Activated T-helper 2 cell treated with anti-CD3 and anti-CD28 coated beads, Interferon-gamma antibody, Interleukin-2, Interleukin-4, amounts not matched to agents 10 μg/mL and 5 μg/mL and 100 μg/mL, durations not matched to agents 14 hours and 24 hours and 36 hours (primary cell): ENCODE measurements at regions of chr12 and their contacts with region 1.

Region 1: GRCh38 chr12:92145731-92146496 is at the start of gene BTG1:
- DNase-seq: peak; percentile 100
- H3K4me3 Mint-ChIP-seq: peak within 1 kb of the TSS; percentile 98
- H3K27ac Mint-ChIP-seq: peak within 1 kb of the TSS; percentile 99
- H3K4me1 Mint-ChIP-seq: peaks cover 34% of the 10 kb centered on the region
- H3K27me3 Mint-ChIP-seq: no peaks in the 10 kb centered on the region
- total RNA-seq, gene BTG1: 67.8 and 71.7 TPM in 2 replicates

Region 2: DNA sequence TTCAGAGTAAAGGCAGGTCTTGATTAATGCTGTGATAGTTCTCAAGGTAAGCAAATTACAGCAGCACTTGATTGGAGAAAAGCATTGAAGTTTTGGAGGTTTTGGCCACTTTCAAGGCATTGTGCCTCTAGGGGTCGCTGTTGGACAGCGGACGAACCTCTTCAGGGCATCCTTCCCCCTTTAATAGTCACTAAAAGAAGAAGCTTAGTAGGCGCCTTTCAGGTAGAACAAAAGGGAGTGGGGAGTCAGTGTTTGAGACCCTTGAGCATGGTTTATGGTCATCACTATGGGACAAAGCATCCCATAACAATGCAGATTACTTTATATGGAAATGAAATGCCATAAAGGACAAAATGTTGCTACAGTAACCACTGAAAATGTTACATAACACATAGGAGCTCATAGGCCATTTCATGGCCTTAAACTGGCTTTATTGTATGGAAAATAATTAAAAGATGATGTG is 763.8 kb before region 1 on chr12:
- intact Hi-C with region 1: loop called (anchors 1 kb)
- DNase-seq: peak; percentile 64
- H3K4me3 Mint-ChIP-seq: peak overlapping the region; percentile 78
- H3K27ac Mint-ChIP-seq: no peak overlapping the region
- H3K4me1 Mint-ChIP-seq: peaks cover 3% of the 10 kb centered on the region
- H3K27me3 Mint-ChIP-seq: peaks cover 6% of the 10 kb centered on the region

Region 3: GRCh38 chr12:91877022-91877421 is 268.9 kb before region 1 on chr12:
- intact Hi-C with region 1: loop called (anchors 1 kb)
- DNase-seq: peak; percentile 75
- H3K4me3 Mint-ChIP-seq: peak overlapping the region; percentile 54
- H3K27ac Mint-ChIP-seq: peak overlapping the region; percentile 94
- H3K4me1 Mint-ChIP-seq: peaks cover 48% of the 10 kb centered on the region
- H3K27me3 Mint-ChIP-seq: no peaks in the 10 kb centered on the region

Region 4: DNA sequence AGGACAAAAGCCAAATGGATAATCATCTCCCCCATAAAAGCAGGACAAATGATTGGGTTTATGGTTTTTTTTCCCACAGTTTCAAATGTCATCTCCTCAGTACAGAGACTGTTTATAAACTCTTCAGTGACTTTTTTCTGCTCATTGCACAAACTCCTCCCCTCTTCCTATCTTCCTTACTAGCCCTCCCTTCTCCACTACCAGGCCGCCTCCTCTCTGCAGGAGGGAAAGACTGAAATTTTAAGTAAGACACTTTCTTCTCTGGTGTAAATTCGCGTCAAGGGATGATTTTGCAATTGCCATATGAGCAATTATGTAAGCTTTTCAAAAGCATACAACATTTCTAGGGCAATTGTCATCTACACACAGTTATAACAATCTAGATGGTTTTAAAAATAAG is 37.3 kb before region 1 on chr12:
- intact Hi-C with region 1: no loop called
- DNase-seq: no peak
- H3K4me3 Mint-ChIP-seq: no peak overlapping the region
- H3K27ac Mint-ChIP-seq: no peak overlapping the region
- H3K4me1 Mint-ChIP-seq: peaks cover 52% of the 10 kb centered on the region
- H3K27me3 Mint-ChIP-seq: no peaks in the 10 kb centered on the region

Region 5: GRCh38 chr12:92185052-92185451 is 39.1 kb after region 1 on chr12:
- intact Hi-C with region 1: loop called (anchors 1 kb)
- DNase-seq: peak; percentile 41
- H3K4me3 Mint-ChIP-seq: no peak overlapping the region
- H3K27ac Mint-ChIP-seq: peak overlapping the region; percentile 44
- H3K4me1 Mint-ChIP-seq: peaks cover 56% of the 10 kb centered on the region
- H3K27me3 Mint-ChIP-seq: peaks cover 2% of the 10 kb centered on the region

Region 6: GRCh38 chr12:92363295-92364146 is 217.6 kb after region 1 on chr12:
- intact Hi-C with region 1: loop called (anchors 5 kb)
- DNase-seq: no peak
- H3K4me3 Mint-ChIP-seq: peak overlapping the region; percentile 64
- H3K27ac Mint-ChIP-seq: peak overlapping the region; percentile 57
- H3K4me1 Mint-ChIP-seq: peaks cover 37% of the 10 kb centered on the region
- H3K27me3 Mint-ChIP-seq: no peaks in the 10 kb centered on the region

Region 7: DNA sequence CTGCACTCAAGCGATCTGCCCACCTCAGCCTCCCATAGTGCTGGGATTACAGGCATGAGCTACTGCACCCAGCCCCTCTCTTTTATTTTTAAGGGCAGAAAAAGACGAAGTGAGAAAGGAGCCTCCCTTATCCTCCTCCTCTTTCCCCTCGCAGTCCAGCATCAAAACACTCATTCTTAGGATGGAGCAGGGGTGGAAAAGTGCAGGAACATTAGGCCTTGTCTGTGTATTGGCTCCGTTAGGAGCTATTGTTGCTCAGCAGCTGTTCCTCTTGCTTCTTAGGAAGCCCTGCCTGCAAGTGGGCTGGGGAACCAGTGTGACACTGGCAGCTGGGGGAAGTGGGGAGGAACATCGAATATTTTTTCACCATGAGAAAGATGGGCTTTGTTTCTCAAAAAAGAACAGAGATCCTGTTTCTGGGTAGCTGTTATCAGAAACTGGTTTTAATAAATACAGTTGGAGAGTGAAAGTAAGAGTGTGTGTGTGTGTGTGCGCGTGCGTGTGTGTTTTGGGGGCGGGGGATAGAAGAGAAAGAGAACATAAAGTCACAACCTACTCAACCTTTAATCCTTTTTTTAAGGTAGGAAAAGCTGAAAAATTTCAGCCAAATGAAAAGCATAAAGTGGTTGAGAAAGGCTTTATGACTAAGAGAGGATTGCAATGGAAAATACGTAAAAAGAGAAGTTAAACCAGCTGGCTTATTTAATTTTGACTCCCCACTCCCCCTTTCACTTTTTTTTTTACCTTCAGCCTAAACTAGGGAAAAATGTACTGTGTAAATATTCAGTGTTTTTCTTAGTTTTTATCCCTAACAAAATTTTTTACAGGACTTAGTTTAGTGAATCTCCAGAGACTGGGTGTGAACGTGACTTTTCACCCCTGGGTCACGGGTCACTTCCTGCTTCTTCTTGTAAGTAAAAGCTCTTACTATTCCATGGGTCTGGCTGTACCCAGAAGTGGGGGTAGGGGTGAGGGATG is 359.6 kb after region 1 on chr12:
- intact Hi-C with region 1: loop called (anchors 2 kb)
- DNase-seq: peak; percentile 36
- H3K4me3 Mint-ChIP-seq: peak overlapping the region; percentile 70
- H3K27ac Mint-ChIP-seq: peak overlapping the region; percentile 89
- H3K4me1 Mint-ChIP-seq: peaks cover 47% of the 10 kb centered on the region
- H3K27me3 Mint-ChIP-seq: no peaks in the 10 kb centered on the region

Region 8: DNA sequence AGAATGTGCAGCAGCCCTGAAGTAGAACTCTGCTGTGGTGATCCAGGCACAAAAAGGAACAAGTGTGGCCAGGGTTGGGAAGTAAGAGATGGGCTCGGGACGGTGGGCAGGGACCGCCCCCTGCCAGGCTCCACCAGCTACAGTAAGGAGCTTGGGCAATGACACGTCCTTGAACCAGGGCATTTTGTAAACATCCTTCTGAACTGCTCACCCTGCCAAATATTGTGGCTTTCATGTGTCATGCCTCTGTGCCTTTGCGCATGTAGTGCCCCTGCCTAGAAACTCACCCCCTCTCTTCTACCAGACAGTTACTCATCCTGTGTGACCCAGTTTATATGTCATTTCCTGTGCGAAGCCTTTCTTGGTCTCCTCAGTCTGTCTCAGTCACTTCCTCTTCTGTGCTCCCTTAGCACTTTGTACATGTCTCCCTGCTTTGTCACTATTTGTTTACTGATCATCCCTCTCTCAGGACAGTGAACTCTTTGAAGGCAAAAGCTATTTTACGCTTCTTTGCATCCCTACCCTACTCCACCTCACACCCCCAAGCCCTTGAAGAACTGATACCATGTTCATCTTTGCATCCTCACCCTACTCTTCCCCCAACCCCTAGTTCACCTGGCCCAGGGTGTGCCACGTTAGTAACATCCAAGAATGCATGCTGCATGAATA is 448.0 kb after region 1 on chr12:
- intact Hi-C with region 1: loop called (anchors 2 kb)
- DNase-seq: peak; percentile 66
- H3K4me3 Mint-ChIP-seq: peak overlapping the region; percentile 19
- H3K27ac Mint-ChIP-seq: peak overlapping the region; percentile 94
- H3K4me1 Mint-ChIP-seq: peaks cover 60% of the 10 kb centered on the region
- H3K27me3 Mint-ChIP-seq: no peaks in the 10 kb centered on the region

Region 9: GRCh38 chr12:92639017-92639416 is 493.1 kb after region 1 on chr12:
- intact Hi-C with region 1: no loop called
- DNase-seq: no peak
- H3K4me3 Mint-ChIP-seq: no peak overlapping the region
- H3K27ac Mint-ChIP-seq: no peak overlapping the region
- H3K4me1 Mint-ChIP-seq: no peaks in the 10 kb centered on the region
- H3K27me3 Mint-ChIP-seq: peaks cover 2% of the 10 kb centered on the region